K562 (cell line): ENCODE measurements at regions of chr5 and their contacts with region 1.

Region 1: DNA sequence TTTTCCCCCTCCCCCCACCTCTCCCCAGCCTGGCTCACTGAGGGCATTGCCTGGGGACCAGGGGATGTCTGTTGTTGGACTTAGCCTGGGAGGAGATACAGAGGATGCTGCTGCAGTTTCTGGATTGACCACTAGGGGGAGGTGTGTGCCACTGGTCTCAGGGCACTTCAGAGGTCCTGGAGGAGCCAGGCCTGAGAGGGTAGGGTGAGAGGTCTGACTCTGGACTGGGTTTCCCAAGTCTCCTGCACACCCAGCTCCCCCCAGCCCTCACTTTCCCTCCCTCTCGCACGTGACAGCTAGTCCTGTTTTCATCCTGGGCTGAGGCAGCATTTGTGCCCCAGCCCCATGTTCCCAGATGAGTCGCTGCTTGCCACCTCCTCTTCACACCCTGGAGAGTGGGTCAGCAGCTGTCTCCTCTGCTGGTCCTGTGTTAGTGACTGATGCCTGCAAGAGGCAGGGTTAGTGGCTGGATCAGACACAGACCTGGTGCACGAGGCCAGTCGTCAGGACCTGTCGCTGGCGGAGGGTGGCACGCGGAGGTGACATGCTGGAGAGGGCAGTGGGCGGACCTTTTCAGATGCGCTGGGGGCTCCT is 4.4 kb downstream of the IL3 start:
- DNase-seq: peak; percentile 81 to 88 (median 83)
- ATAC-seq: peak; percentile 91
- H3K4me3 ChIP-seq: no peak overlapping the region
- H3K27ac ChIP-seq: no peak overlapping the region
- H3K4me1 ChIP-seq: peaks cover 8 to 26% of the 10 kb centered on the region in 2 experiments; a peak in 4 of 5 replicates
- H3K27me3 ChIP-seq: no peaks in the 10 kb centered on the region
- CTCF ChIP-seq: peak; percentile 91 to 95 (median 94)
- EP300 ChIP-seq: no peak
- POLR2A ChIP-seq: no peak
- RAD21 ChIP-seq: peak; percentile 60 to 85

Region 2: DNA sequence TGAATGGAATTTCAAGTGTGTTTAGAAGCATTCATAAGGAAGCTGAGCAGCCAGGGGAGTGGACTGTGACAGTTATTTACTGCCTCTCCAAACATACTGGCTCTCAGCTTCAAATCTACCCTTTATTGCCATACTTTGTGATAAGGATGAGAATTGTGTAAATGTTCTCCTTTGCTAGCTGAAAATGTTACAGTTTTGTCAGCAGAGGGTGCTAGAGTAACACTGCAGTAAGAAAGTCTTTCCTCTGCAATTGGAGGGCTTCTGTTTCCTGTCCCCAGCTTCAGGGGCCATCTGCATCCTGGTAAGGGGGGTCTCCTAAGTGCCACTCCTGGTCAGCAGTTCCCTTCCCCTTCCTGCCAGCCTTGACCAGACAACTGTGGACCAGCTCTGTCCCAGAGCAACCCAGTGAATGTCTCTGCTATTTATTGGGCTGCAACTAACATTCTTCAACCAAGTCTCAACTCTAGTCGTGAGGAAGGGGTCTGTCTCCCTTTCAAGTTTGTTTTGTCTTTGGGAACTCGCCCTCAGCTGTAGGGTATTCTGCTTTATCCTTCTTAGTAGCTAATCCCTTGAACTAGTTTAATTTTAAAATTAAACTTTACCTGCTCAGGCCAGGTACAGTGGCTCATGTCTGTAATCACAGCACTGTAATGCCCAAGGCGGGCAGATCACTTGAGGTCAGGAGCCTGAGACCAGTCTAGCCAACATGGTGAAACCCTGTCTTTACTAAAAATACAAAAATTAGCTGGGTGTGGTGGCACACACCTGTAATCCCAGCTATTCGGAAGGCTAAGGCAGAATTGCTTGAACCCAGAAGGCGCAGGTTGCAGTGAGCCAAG is 475.1 kb before region 1 on chr5:
- CTCF ChIA-PET with region 1: interaction called, 5 read pairs
- POLR2A ChIA-PET with region 1: no interaction called
- in situ Hi-C with region 1: no loop called
- intact Hi-C with region 1: loop called (anchors 1 kb)
- DNase-seq: peak; percentile 29 to 65 (median 42)
- ATAC-seq: peak; percentile 93
- H3K4me3 ChIP-seq: no peak overlapping the region
- H3K27ac ChIP-seq: no peak overlapping the region
- H3K4me1 ChIP-seq: no peaks in the 10 kb centered on the region; a peak in 2 of 5 replicates
- H3K27me3 ChIP-seq: no peaks in the 10 kb centered on the region
- CTCF ChIP-seq: peak; percentile 70 to 87 (median 84)
- EP300 ChIP-seq: no peak
- POLR2A ChIP-seq: no peak
- RAD21 ChIP-seq: peak; percentile 94 to 96

Region 3: DNA sequence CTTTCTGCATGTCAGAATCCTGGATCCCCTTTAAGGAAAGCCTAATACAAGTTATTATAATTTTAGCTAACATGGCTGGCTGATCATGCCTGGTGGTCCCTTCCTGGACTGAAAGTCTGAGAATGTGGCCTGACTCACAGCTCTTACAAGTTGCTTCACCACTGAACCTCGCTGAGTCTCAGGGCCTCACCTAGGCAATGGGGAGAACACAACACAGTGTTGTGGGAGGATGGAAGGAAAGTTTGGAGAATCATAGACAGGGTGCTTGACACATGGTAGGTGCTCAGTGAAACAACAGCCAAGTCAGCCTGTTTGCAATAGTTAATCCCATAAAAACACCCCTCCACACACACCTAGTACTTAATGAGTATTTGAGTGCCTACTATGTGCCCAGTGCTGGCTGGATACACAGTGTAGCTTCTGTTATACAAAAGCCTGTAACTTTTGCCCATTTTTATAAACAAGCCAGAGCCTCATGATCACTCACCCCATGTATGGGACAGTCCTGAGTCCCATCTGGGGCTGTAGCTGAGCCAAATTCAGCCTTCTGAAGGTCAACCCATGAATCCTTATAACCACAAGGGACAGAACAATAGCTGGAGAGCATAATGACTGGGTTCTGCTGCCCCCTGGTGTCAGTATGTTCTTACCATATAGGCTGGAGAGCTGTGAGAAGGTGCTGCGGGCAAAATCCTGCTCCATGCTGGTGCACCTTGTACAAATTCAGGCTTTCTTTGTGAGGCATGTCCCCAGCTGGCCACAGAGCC is 57.3 kb before region 1 on chr5:
- CTCF ChIA-PET with region 1: no interaction called
- POLR2A ChIA-PET with region 1: no interaction called
- in situ Hi-C with region 1: no loop called
- intact Hi-C with region 1: loop called (anchors 1 kb)
- DNase-seq: peak; percentile 70 to 89 (median 74)
- ATAC-seq: peak; percentile 89
- H3K4me3 ChIP-seq: no peak overlapping the region
- H3K27ac ChIP-seq: no peak overlapping the region
- H3K4me1 ChIP-seq: peaks cover 8 to 18% of the 10 kb centered on the region in 2 experiments; a peak in 4 of 5 replicates
- H3K27me3 ChIP-seq: peaks cover 0 to 7% of the 10 kb centered on the region in 2 experiments; a peak in 2 of 5 replicates
- CTCF ChIP-seq: peak; percentile 83 to 97 (median 96)
- EP300 ChIP-seq: no peak
- POLR2A ChIP-seq: no peak
- RAD21 ChIP-seq: peak; percentile 94 to 99

Region 4: DNA sequence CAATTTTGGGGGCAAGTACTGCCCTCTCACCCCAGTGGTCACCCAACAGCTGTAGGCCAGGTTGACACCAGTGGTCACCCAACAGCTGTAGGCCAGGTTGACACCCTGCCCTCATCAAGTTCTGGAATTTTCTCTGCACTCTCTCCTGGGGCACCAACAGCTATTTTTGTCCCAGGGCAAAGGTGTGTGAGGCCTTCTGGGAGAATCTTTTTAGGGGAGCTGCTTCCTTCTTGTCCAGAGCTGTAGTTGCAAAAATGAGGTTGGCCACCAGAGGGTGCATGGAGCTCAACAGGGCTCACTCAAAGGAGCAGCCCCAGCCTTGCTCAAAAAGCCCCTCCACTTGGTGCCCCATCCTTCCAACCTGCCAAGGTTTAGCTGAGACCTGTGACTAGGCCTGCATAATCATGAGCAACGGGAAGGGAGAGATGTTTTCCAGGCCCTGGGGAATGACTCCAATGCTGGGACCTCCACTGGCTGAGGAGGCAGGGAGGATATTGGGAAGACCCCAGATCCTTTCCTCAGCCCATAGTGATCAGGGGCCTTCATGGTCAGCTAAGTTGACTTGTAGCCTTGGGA is 173.4 kb after region 1 on chr5:
- CTCF ChIA-PET with region 1: interaction called, 3 read pairs
- POLR2A ChIA-PET with region 1: no interaction called
- in situ Hi-C with region 1: no loop called
- intact Hi-C with region 1: loop called (anchors 5 kb)
- DNase-seq: peak; percentile 64 to 86 (median 77)
- ATAC-seq: peak; percentile 94
- H3K4me3 ChIP-seq: no peak overlapping the region
- H3K27ac ChIP-seq: no peak overlapping the region
- H3K4me1 ChIP-seq: no peaks in the 10 kb centered on the region; a peak in 2 of 5 replicates
- H3K27me3 ChIP-seq: no peaks in the 10 kb centered on the region
- CTCF ChIP-seq: peak; percentile 80 to 87 (median 81)
- EP300 ChIP-seq: no peak
- POLR2A ChIP-seq: no peak
- RAD21 ChIP-seq: peak; percentile 41 to 86

Region 5: GRCh38 chr5:132386644-132387286 is 321.9 kb after region 1 on chr5:
- CTCF ChIA-PET with region 1: no interaction called
- POLR2A ChIA-PET with region 1: no interaction called
- in situ Hi-C with region 1: loop called (anchors 25 kb)
- intact Hi-C with region 1: loop called (anchors 10 kb)
- DNase-seq: peak; percentile 51 to 74 (median 67)
- ATAC-seq: peak; percentile 96
- H3K4me3 ChIP-seq: no peak overlapping the region
- H3K27ac ChIP-seq: no peak overlapping the region
- H3K4me1 ChIP-seq: peaks cover 10 to 12% of the 10 kb centered on the region in 2 experiments; a peak in 3 of 5 replicates
- H3K27me3 ChIP-seq: no peaks in the 10 kb centered on the region
- CTCF ChIP-seq: peak; percentile 81 to 87 (median 82)
- EP300 ChIP-seq: no peak
- POLR2A ChIP-seq: no peak
- RAD21 ChIP-seq: peak; percentile 92 to 95

Region 6: GRCh38 chr5:132495667-132496190 is 430.9 kb after region 1 on chr5:
- CTCF ChIA-PET with region 1: interaction called, 20 read pairs
- POLR2A ChIA-PET with region 1: no interaction called
- in situ Hi-C with region 1: loop called (anchors 5 kb)
- intact Hi-C with region 1: loop called (anchors 2 kb)
- DNase-seq: peak; percentile 90 to 95 (median 94)
- ATAC-seq: peak; percentile 84
- H3K4me3 ChIP-seq: peak overlapping the region; percentile 72
- H3K27ac ChIP-seq: peak overlapping the region; percentile 87
- H3K4me1 ChIP-seq: peaks cover 47 to 61% of the 10 kb centered on the region in 2 experiments
- H3K27me3 ChIP-seq: no peaks in the 10 kb centered on the region
- CTCF ChIP-seq: peak; percentile 33 to 40 (median 39); a peak in 5 of 6 replicates
- EP300 ChIP-seq: peak; percentile 60
- POLR2A ChIP-seq: peak; percentile 61
- RAD21 ChIP-seq: peak; percentile 43 to 48

Region 7: GRCh38 chr5:133499895-133500294 is 1435.1 kb after region 1 on chr5:
- CTCF ChIA-PET with region 1: no interaction called
- POLR2A ChIA-PET with region 1: no interaction called
- in situ Hi-C with region 1: no loop called
- intact Hi-C with region 1: no loop called
- DNase-seq: no peak
- ATAC-seq: no peak
- H3K4me3 ChIP-seq: no peak overlapping the region
- H3K27ac ChIP-seq: no peak overlapping the region
- H3K4me1 ChIP-seq: no peaks in the 10 kb centered on the region
- H3K27me3 ChIP-seq: peaks cover 12 to 40% of the 10 kb centered on the region in 2 experiments
- CTCF ChIP-seq: no peak
- EP300 ChIP-seq: no peak
- POLR2A ChIP-seq: no peak
- RAD21 ChIP-seq: no peak